Mammary epithelial cell (primary cell): ENCODE measurements at regions of chr6 and their contacts with region 1.

Region 1: GRCh38 chr6:146133866-146134265 is 105.0 kb downstream of the GRM1 start:
- DNase-seq: no peak
- H3K4me3 ChIP-seq: no peak overlapping the region
- H3K27ac ChIP-seq: no peak overlapping the region
- H3K4me1 ChIP-seq: no peaks in the 10 kb centered on the region
- H3K27me3 ChIP-seq: peaks cover 2% of the 10 kb centered on the region
- CTCF ChIP-seq: no peak

Region 2: DNA sequence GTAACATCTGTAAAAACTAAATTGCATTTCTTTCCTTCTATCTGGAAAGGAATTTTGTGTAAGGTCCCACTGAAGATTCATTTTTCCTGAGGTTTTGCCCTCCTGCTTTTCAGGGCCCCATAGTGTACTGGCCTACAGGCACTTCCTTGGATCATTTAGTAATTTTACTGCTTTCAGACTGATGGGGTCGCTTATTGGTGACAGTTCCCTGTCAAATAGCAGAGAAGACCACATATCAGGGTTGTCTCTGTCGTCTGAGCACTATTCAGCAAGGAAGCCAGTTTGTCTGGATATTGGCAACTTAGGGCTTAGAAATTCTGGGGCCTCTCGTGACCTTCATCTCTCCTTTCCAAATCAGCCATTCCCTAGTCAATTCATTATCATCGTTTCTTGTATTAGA is 101.5 kb before region 1 on chr6:
- CTCF ChIA-PET with region 1: no interaction called
- dilution Hi-C with region 1: no loop called
- in situ Hi-C with region 1: no loop called
- intact Hi-C with region 1: no loop called
- DNase-seq: no peak
- H3K4me3 ChIP-seq: no peak overlapping the region
- H3K27ac ChIP-seq: no peak overlapping the region
- H3K4me1 ChIP-seq: no peaks in the 10 kb centered on the region
- H3K27me3 ChIP-seq: peaks cover 22% of the 10 kb centered on the region
- CTCF ChIP-seq: no peak

Region 3: DNA sequence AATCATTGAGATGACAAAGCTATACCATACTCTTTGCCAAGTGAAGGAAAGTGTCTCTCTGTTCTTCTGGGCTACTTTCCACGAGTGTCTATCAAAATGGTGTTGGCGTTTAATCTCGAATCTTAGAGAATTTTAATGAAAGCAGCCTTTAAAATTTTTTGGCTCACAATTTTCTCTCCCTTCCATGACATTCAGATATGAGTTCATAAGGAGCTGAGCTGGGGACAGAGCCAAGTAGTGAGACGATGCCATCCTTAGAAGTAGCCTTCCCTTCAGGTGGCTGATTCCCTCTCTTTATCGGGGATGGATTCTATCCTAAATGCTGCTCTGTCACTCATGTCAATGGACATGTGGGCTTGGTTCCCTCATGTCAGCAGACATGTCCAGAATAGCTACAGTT is 27.8 kb after region 1 on chr6:
- CTCF ChIA-PET with region 1: no interaction called
- dilution Hi-C with region 1: no loop called
- in situ Hi-C with region 1: no loop called
- intact Hi-C with region 1: loop called (anchors 2 kb)
- DNase-seq: no peak
- H3K4me3 ChIP-seq: no peak overlapping the region
- H3K27ac ChIP-seq: no peak overlapping the region
- H3K4me1 ChIP-seq: no peaks in the 10 kb centered on the region
- H3K27me3 ChIP-seq: no peaks in the 10 kb centered on the region
- CTCF ChIP-seq: no peak